Mammary epithelial cell (primary cell): ENCODE measurements at regions of chr9 and their contacts with region 1.

Region 1: DNA sequence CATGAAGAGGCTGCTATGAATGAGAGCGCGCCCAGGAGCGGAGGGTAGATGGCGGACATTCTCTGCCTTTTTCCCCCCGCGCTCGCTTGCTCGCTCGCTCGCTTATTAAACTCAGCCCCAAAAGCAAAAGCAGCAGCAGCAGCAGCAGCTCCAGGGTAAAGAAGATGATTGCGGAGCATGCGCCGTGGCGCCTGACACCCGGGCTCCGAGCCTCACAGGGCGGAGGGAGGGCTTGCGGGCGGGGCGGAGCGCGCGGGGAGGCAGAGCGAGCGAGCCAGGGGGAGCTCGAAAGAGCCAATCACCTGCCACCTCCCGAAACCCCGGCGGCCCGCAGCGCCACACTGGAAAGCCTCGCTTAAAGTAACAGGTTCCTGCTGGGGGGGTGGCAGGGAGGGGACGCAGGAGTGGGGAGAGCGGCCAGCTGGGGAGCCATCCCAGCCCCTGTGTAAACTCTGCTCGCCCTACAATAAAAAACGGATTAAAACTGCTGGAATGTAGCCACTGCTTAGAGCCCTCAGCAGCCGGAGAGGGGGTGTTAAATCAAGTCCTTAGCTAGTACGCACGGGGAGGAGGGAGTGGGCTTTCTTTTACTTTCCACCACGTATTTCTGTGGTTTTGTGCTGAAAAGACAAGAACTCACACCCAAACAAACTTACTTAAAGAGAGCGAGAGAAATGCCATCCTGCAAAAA is at the start of gene MLLT3:
- DNase-seq: peak; percentile 94
- H3K4me3 ChIP-seq: peak within 1 kb of the TSS; percentile 81 to 97 (median 84)
- H3K27ac ChIP-seq: peak within 1 kb of the TSS; percentile 29
- H3K4me1 ChIP-seq: peaks cover 33% of the 10 kb centered on the region
- H3K27me3 ChIP-seq: no peaks in the 10 kb centered on the region
- CTCF ChIP-seq: no peak
- total RNA-seq, gene MLLT3: 8.8 to 11.7 TPM

Region 2: DNA sequence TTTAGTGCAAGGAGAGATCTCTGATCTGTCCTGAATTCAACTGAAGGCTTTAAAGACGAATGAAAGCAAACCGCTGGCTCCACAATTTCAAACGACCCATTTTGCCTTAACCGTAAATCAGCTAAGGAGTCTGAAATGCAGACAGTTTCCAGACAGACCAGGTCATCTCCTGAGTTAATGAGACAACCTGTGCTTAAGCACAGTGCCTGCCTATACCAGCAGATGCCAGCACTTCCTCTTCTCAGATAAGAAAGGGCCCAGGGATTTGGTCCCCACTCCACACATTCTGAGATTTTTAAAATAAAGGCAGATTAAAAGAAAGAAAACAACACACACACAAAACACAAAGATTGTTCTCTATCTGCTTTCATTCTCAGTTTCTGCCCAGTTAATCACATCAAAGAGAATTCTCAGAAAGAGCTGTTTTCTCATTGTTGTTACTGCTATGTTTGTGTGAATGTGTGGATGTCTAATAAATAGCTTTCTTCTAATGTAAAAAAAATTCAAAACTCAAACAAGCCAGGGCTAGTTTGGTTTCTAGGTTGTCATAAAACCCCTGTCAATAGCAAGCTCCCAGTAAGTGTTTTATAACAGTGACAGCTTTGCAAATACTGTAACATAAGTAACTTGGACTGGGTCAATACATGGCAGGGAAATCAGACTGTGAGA is 675.9 kb before region 1 on chr9:
- CTCF ChIA-PET with region 1: no interaction called
- dilution Hi-C with region 1: no loop called
- in situ Hi-C with region 1: loop called in 1 of 2 experiments (anchors 25 kb)
- intact Hi-C with region 1: loop called (anchors 5 kb)
- DNase-seq: peak; percentile 32
- H3K4me3 ChIP-seq: no peak overlapping the region
- H3K27ac ChIP-seq: no peak overlapping the region
- H3K4me1 ChIP-seq: peaks cover 2% of the 10 kb centered on the region
- H3K27me3 ChIP-seq: no peaks in the 10 kb centered on the region
- CTCF ChIP-seq: peak; percentile 55 to 75

Region 3: GRCh38 chr9:20191228-20191840 is 431.1 kb before region 1 on chr9:
- CTCF ChIA-PET with region 1: no interaction called
- dilution Hi-C with region 1: no loop called
- in situ Hi-C with region 1: no loop called
- intact Hi-C with region 1: loop called (anchors 5 kb)
- DNase-seq: no peak
- H3K4me3 ChIP-seq: no peak overlapping the region
- H3K27ac ChIP-seq: no peak overlapping the region
- H3K4me1 ChIP-seq: no peaks in the 10 kb centered on the region
- H3K27me3 ChIP-seq: peaks cover 4% of the 10 kb centered on the region
- CTCF ChIP-seq: peak in 1 of 2 donors; percentile 36

Region 4: DNA sequence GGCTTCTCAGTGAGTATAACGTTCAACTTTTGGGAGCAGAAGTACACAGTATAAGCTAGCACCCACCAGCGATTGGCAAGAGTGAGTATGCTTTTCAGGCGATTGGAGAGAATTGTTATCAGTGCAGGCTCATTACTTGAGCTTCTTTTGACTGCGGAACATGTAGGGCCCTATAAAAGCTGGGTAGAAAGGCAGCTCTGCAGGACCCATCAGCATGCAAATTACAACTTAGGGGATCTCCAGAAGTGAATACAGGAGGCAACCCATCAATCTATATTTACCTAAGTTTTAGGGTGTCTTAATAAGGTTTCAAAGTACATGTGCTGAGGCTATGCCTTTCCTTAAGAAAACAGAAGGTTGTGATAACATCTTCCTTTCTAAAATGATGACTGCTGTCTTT is 225.1 kb before region 1 on chr9:
- CTCF ChIA-PET with region 1: no interaction called
- dilution Hi-C with region 1: no loop called
- in situ Hi-C with region 1: no loop called
- intact Hi-C with region 1: no loop called
- DNase-seq: no peak
- H3K4me3 ChIP-seq: no peak overlapping the region
- H3K27ac ChIP-seq: no peak overlapping the region
- H3K4me1 ChIP-seq: no peaks in the 10 kb centered on the region
- H3K27me3 ChIP-seq: no peaks in the 10 kb centered on the region
- CTCF ChIP-seq: no peak

Region 5: GRCh38 chr9:20479419-20480155 is 142.9 kb before region 1 on chr9:
- CTCF ChIA-PET with region 1: interaction called, 3 read pairs
- dilution Hi-C with region 1: no loop called
- in situ Hi-C with region 1: no loop called
- intact Hi-C with region 1: loop called (anchors 5 kb)
- DNase-seq: peak; percentile 81
- H3K4me3 ChIP-seq: no peak overlapping the region
- H3K27ac ChIP-seq: no peak overlapping the region
- H3K4me1 ChIP-seq: peaks cover 16% of the 10 kb centered on the region
- H3K27me3 ChIP-seq: peaks cover 5% of the 10 kb centered on the region
- CTCF ChIP-seq: no peak

Region 6: DNA sequence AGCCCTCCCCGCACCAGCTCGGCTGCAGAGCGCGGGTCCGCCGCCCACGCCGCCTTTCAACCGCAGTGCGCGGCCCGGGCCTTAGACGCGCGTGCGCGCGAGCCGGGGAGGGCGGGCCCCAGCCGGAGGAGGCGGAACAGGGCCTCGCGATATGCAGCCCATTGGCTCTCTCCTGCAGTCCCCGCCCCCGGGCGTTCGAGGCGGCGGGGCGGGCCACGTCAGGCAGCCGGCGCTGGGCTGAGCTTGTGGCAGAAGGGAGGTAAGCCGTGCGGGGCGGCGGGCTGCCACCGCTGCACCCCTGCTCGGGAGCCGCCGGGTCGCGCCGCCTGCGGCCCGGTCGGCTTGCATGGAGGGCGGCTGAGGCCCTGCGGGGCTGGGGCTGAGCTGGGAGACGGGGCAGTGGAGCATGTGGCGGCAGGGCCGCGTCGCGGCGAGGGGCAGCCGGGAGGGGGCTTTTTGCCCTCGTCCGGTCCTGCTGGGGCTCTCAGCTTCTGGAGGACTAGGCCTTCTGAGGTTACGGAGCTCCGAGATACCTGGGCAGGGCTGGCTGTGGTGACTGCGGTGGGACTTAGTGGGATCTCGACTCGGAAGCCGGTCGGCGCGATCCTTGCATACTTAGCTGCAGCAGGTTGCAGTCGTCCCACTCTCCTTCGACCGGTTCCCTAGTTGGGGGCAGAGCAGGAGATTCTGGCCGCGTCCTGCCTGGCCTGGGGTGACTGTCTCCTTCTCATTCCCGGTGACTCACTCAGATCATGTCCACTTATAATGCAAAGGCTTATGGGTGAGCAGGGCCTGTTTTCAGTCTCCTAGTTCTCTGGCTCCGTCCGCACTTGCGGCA is 61.8 kb after region 1 on chr9 and contains the start of gene FOCAD:
- CTCF ChIA-PET with region 1: interaction called, 4 read pairs
- dilution Hi-C with region 1: no loop called
- in situ Hi-C with region 1: no loop called
- intact Hi-C with region 1: loop called (anchors 2 kb)
- DNase-seq: peak; percentile 94
- H3K4me3 ChIP-seq: peak within 1 kb of the TSS; percentile 52 to 73 (median 68)
- H3K27ac ChIP-seq: peak within 1 kb of the TSS; percentile 69
- H3K4me1 ChIP-seq: peaks cover 24% of the 10 kb centered on the region
- H3K27me3 ChIP-seq: no peaks in the 10 kb centered on the region
- CTCF ChIP-seq: no peak
- total RNA-seq, gene FOCAD: 22.5 to 48.2 TPM

Region 7: GRCh38 chr9:21096172-21096900 is 473.9 kb after region 1 on chr9:
- CTCF ChIA-PET with region 1: no interaction called
- dilution Hi-C with region 1: no loop called
- in situ Hi-C with region 1: loop called (anchors 10 to 25 kb)
- intact Hi-C with region 1: loop called (anchors 1 kb)
- DNase-seq: peak; percentile 82
- H3K4me3 ChIP-seq: peak overlapping the region; percentile 21 to 34 (median 31)
- H3K27ac ChIP-seq: peak overlapping the region; percentile 38
- H3K4me1 ChIP-seq: peaks cover 15% of the 10 kb centered on the region
- H3K27me3 ChIP-seq: no peaks in the 10 kb centered on the region
- CTCF ChIP-seq: no peak